Transverse colon (tissue), 4 donors: ENCODE measurements at regions of chr3 and their contacts with region 1.

Region 1: DNA sequence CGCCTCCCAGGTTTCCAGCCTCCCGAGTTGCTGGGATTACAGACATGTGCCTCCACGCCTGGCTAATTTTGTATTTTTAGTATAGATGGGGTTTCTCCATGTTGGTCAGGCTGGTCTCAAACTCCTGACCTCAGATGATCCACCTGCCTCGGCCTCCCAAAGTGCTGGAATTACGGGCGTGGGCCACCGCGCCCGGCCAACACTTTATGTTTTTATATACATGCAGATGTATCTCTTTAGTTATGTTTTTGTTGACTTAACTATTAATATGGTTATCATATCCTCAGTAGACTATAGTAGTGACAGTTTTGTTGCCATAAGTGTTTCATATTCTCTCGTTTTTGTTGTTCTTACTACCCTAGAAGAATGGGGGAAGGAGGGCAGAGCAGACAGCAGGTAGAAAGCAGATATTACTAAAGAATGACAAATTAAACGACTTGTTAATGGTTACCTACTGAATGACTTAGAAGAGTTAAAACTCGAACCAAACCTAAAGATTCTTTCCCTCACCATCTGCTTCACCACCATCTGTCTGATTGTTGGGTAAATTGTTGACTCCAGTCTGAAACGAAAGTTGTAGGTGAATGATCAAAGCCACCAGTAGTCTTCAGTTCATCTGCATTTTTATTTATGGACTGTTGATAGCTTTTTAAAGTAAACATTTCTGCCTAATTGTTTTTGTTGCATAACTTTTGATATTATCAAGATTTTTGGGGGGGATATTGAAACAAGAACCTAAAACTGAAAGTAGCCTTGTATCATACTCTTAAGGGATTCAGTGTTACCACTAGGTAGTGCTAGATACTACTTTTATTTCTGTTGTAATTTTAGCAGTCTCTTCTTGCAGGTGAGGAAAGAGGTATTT is 89.3 kb downstream of the RASA2 start:
- DNase-seq: no peak
- H3K4me3 ChIP-seq: peak overlapping the region in 3 of 4 donors; percentile 0 to 14 (median 11)
- H3K27ac ChIP-seq: peak overlapping the region; percentile 17 to 59 (median 53)
- H3K4me1 ChIP-seq: peaks cover 0 to 13% (median 0%) of the 10 kb centered on the region in 4 donors
- H3K27me3 ChIP-seq: no peaks in the 10 kb centered on the region
- CTCF ChIP-seq: peak; percentile 51 to 69 (median 58)
- EP300 ChIP-seq: no peak
- POLR2A ChIP-seq: no peak

Region 2: DNA sequence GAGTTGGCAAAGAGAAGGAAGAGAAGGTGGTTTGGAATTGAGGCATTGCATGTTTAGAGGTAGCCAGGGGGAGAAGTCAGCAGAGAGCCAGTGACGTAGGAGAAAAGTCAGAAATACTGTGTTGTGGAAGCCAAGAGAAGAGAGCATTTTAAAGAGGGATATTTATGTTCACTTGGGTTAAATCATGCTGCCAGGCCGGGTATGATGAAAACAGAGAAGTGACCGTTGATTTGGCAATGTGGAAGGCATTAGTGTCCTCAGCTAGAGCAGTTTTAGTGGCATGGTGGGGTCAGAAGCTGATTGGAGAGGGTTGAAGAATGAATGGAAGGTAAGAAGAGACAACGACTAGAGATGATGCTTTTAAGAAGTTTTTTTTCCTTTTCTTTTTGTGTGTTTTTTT is 64.8 kb before region 1 on chr3:
- in situ Hi-C with region 1: no loop called
- intact Hi-C with region 1: loop called (anchors 2 kb)
- DNase-seq: no peak
- H3K4me3 ChIP-seq: no peak overlapping the region
- H3K27ac ChIP-seq: no peak overlapping the region
- H3K4me1 ChIP-seq: no peaks in the 10 kb centered on the region
- H3K27me3 ChIP-seq: no peaks in the 10 kb centered on the region
- CTCF ChIP-seq: no peak
- EP300 ChIP-seq: no peak
- POLR2A ChIP-seq: no peak

Region 3: GRCh38 chr3:141738022-141738890 is 162.1 kb after region 1 on chr3 and contains the start of gene RNF7:
- in situ Hi-C with region 1: no loop called
- intact Hi-C with region 1: no loop called
- DNase-seq: peak; percentile 97
- H3K4me3 ChIP-seq: peak within 1 kb of the TSS; percentile 79 to 82 (median 81)
- H3K27ac ChIP-seq: peak within 1 kb of the TSS; percentile 95 to 99 (median 97)
- H3K4me1 ChIP-seq: peaks cover 18 to 41% (median 31%) of the 10 kb centered on the region in 4 donors
- H3K27me3 ChIP-seq: no peaks in the 10 kb centered on the region
- CTCF ChIP-seq: peak; percentile 81 to 98 (median 86)
- EP300 ChIP-seq: no peak
- POLR2A ChIP-seq: peak; percentile 93
- total RNA-seq, gene RNF7: 23.7 to 122 (median 58.5) TPM

Region 4: DNA sequence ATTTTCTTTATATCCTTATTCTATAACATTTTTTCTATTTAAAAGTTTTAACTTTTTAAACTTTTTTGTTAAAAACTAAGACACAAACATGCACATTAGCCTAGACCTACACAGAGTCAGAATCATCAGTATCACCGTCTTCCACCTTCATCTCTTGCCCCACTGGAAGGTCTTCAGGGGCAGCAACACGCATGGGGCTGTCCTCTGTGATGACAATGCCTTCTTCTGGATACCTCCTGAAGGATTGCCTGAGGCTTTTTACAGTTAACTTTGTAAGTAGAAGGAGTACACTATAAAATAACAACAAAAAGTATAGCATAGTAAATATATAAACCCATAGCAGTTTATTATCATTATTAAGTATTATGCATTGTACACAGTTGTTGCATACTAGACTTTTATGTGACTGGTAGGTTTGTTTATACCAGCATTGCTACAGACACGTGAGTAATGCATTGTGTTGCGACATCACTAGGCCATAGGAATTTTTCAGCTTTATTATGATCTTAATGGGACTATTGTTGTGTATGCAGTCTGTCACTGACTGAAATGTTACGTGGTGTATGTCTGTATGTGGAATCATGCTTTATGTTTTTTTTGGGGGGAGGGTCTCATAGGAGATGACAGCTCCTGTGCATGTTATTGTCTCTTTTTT is 318.5 kb after region 1 on chr3:
- in situ Hi-C with region 1: no loop called
- intact Hi-C with region 1: loop called (anchors 10 kb)
- DNase-seq: no peak
- H3K4me3 ChIP-seq: no peak overlapping the region
- H3K27ac ChIP-seq: no peak overlapping the region
- H3K4me1 ChIP-seq: peaks cover 0 to 19% (median 2%) of the 10 kb centered on the region in 4 donors
- H3K27me3 ChIP-seq: no peaks in the 10 kb centered on the region
- CTCF ChIP-seq: no peak
- EP300 ChIP-seq: no peak
- POLR2A ChIP-seq: no peak